K562 (cell line): ENCODE measurements at regions of chr6 and their contacts with region 1.

Region 1: GRCh38 chr6:106085984-106086813 is at the start of gene PRDM1:
- DNase-seq: peak; percentile 74 to 87 (median 80)
- ATAC-seq: peak; percentile 94
- H3K4me3 ChIP-seq: peak within 1 kb of the TSS; percentile 43
- H3K27ac ChIP-seq: 0 out of 3 replicates have a peak within 1 kb of the TSS, but pooled peaks have one; percentile 9
- H3K4me1 ChIP-seq: peaks cover 7 to 13% of the 10 kb centered on the region in 2 experiments; a peak in 4 of 5 replicates
- H3K27me3 ChIP-seq: no peaks in the 10 kb centered on the region
- CTCF ChIP-seq: peak; percentile 34 to 38 (median 35); a peak in 3 of 6 replicates
- EP300 ChIP-seq: no peak
- POLR2A ChIP-seq: no peak
- RAD21 ChIP-seq: peak; percentile 65 to 72
- polyA plus RNA-seq, gene PRDM1: 0.20 to 0.21 TPM

Region 2: GRCh38 chr6:105431226-105431625 is 655.0 kb before region 1 on chr6:
- CTCF ChIA-PET with region 1: no interaction called
- POLR2A ChIA-PET with region 1: no interaction called
- in situ Hi-C with region 1: no loop called
- intact Hi-C with region 1: loop called (anchors 5 kb)
- DNase-seq: peak in 3 of 4 experiments; percentile 13 to 57 (median 22)
- ATAC-seq: no peak
- H3K4me3 ChIP-seq: no peak overlapping the region
- H3K27ac ChIP-seq: no peak overlapping the region
- H3K4me1 ChIP-seq: no peaks in the 10 kb centered on the region
- H3K27me3 ChIP-seq: 0 out of 5 replicates have a peak, but pooled peaks cover 0 to 2% of the 10 kb centered on the region in 2 experiments
- CTCF ChIP-seq: peak; percentile 30 to 63 (median 46); a peak in 4 of 6 replicates
- EP300 ChIP-seq: no peak
- POLR2A ChIP-seq: no peak
- RAD21 ChIP-seq: peak; percentile 71 to 72

Region 3: GRCh38 chr6:105733565-105734162 is 352.5 kb before region 1 on chr6:
- CTCF ChIA-PET with region 1: interaction called, 8 read pairs
- POLR2A ChIA-PET with region 1: no interaction called
- in situ Hi-C with region 1: no loop called
- intact Hi-C with region 1: loop called (anchors 2 kb)
- DNase-seq: peak; percentile 12 to 47 (median 16)
- ATAC-seq: no peak
- H3K4me3 ChIP-seq: no peak overlapping the region
- H3K27ac ChIP-seq: no peak overlapping the region
- H3K4me1 ChIP-seq: no peaks in the 10 kb centered on the region
- H3K27me3 ChIP-seq: no peaks in the 10 kb centered on the region
- CTCF ChIP-seq: peak; percentile 44 to 72 (median 48); a peak in 4 of 6 replicates
- EP300 ChIP-seq: no peak
- POLR2A ChIP-seq: no peak
- RAD21 ChIP-seq: peak; percentile 65 to 88

Region 4: GRCh38 chr6:105835373-105835772 is 250.8 kb before region 1 on chr6:
- CTCF ChIA-PET with region 1: no interaction called
- POLR2A ChIA-PET with region 1: no interaction called
- in situ Hi-C with region 1: no loop called
- intact Hi-C with region 1: loop called (anchors 2 kb)
- DNase-seq: peak; percentile 40 to 79 (median 62)
- ATAC-seq: peak; percentile 97
- H3K4me3 ChIP-seq: no peak overlapping the region
- H3K27ac ChIP-seq: no peak overlapping the region
- H3K4me1 ChIP-seq: peaks cover 0 to 16% of the 10 kb centered on the region in 2 experiments; a peak in 3 of 5 replicates
- H3K27me3 ChIP-seq: no peaks in the 10 kb centered on the region
- CTCF ChIP-seq: peak; percentile 73 to 80 (median 79)
- EP300 ChIP-seq: peak; percentile 39; the same call in 1 of the 2 replicates
- POLR2A ChIP-seq: no peak
- RAD21 ChIP-seq: peak; percentile 75 to 87

Region 5: DNA sequence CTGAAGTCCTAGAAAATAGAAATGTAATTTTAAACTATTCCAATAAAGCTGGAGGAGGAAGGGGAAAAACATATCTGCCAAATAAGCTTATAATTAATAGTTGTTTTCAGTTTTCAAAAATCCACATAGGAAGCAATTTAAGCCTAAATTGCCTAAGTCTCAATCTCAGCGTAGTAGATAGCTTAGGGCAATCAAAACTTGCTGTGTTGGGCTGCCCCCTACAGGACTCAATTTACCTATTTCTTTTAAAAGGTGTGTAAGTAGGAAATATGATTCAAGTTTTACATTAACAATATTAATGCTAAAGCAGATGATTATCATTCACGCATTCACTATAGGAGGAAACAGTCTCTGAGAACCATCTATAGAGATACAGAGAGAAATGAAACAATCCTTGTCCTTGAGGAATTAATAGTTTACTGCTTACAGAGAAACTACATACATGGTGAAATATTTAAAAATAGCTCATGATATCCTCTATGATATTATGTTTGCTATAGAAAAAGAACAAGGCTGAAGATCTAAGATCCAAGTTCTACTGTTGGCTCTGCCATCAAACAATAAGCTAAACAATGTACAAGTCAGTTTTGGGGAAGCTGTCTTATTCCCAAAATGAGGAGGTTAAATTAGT is 137.2 kb after region 1 on chr6:
- CTCF ChIA-PET with region 1: interaction called, 16 read pairs
- POLR2A ChIA-PET with region 1: interaction called, 3 read pairs
- in situ Hi-C with region 1: no loop called
- intact Hi-C with region 1: loop called (anchors 1 kb)
- DNase-seq: peak; percentile 13 to 71 (median 30)
- ATAC-seq: peak; percentile 81
- H3K4me3 ChIP-seq: no peak overlapping the region
- H3K27ac ChIP-seq: no peak overlapping the region
- H3K4me1 ChIP-seq: peaks cover 0 to 5% of the 10 kb centered on the region in 2 experiments; a peak in 1 of 5 replicates
- H3K27me3 ChIP-seq: no peaks in the 10 kb centered on the region
- CTCF ChIP-seq: peak in 2 of 3 experiments; percentile 61 to 80; a peak in 5 of 6 replicates
- EP300 ChIP-seq: no peak
- POLR2A ChIP-seq: no peak
- RAD21 ChIP-seq: peak; percentile 86 to 88